Activated CD4-positive, alpha-beta T cell treated with anti-CD3 and anti-CD28 coated beads, Interleukin-2, amount 10 ng/mL, durations not matched to agents 24 days and 14 days (primary cell): ENCODE measurements at regions of chr12 and their contacts with region 1.

Region 1: DNA sequence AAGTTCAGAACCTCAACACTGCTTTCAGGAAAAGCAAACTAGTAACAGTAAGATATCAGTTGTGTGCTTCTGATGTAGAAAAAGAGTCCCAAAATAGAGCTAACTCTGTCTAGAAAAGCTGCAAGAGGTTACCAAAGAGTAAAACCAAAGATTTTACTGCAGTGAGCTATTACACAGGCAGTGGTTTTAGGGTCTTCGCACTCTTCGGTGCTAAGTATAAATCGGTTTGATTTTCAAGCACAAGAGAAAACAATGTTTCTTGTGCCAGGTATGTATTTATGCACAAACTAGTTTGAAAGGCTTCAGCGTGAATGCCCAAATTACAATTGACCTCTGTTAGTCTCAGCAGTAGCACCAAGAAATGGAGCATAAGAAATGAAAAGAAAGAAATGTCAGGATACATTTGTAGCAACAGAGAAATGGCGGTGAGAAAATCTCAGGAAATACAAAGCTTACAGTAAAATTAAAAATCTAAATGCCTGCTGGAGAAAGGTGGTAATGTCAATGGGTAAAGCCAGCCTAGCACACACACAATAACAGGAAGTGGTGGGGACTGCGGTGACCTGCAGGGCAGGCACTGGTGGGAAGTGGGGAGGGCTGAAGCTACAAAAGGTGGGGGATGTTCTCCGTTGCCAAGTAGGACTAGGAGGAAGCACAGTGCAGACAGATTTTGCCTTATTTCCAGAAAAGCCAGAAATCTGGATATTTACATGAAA is 18.0 kb upstream of the DYRK2 start:
- DNase-seq: peak; percentile 96
- H3K4me3 Mint-ChIP-seq: peak overlapping the region; percentile 73
- H3K27ac Mint-ChIP-seq: peak overlapping the region; percentile 86
- H3K4me1 Mint-ChIP-seq: peaks cover 43% of the 10 kb centered on the region
- H3K27me3 Mint-ChIP-seq: peaks cover 2% of the 10 kb centered on the region

Region 2: DNA sequence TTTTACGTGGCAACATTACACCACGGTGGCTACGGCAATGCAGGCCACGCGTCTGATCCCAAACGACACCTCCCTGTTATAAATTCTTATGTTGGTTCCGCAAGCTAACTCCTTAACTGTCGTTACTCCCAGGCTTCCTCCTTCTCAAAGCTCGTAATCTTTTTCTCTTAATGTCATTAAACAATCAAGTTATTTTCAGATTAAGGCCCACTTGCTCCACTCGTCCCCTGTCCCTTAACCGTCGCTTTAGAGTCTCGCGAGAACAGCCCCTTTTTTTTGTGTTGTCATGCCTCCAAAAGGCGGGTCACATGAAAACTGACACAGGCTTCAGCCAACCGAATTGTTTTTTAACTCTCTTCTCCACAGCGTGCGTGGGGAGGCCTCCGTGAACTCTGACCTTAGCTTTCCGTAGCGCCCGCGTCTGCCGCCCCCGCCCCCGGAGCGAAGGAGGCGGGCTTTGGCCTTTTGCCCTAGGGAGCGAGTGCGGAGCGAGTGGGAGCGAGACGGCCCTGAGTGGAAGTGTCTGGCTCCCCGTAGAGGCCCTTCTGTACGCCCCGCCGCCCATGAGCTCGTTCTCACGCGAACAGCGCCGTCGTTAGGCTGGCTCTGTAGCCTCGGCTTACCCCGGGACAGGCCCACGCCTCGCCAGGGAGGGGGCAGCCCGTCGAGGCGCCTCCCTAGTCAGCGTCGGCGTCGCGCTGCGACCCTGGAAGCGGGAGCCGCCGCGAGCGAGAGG is 361.5 kb before region 1 on chr12 and contains the start of gene CAND1:
- intact Hi-C with region 1: loop called (anchors 5 kb)
- DNase-seq: peak; percentile 99
- H3K4me3 Mint-ChIP-seq: peak within 1 kb of the TSS; percentile 90
- H3K27ac Mint-ChIP-seq: peak within 1 kb of the TSS; percentile 100
- H3K4me1 Mint-ChIP-seq: peaks cover 30% of the 10 kb centered on the region
- H3K27me3 Mint-ChIP-seq: no peaks in the 10 kb centered on the region
- total RNA-seq, gene CAND1: 202 and 216 TPM in 2 replicates

Region 3: DNA sequence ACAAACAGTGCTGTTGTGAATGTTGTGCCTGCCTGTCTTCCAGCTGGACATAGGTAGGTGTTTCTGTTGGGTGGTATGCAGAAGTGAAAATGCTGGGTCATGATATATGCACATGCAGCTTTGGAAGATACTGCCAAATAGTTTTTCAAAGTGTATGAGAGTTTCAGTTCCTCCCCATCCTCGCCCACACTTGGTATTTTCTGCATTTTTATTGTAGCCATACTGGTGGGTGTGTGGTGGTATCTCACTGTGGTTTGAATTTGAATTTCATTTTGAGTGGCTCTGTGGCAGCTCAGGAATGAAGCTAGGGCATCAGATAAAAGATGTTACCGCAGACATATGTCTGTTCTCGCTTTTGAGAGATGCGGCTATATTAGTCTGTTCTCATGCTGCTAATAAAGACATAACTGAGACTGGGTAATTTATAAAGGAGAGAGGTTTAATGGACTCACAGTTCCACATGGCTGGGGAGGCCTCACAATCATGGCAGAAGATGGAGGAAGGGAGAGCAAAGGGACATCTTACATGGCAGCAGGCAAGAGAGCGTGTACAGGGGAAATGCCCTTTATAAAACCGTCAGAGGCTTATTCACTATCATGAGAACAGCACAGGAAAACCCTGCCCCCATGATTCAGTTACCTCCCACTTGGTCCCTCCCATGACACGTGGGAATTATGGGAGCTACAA is 178.3 kb before region 1 on chr12:
- intact Hi-C with region 1: loop called (anchors 5 kb)
- DNase-seq: no peak
- H3K4me3 Mint-ChIP-seq: peak overlapping the region; percentile 16
- H3K27ac Mint-ChIP-seq: peak overlapping the region; percentile 85
- H3K4me1 Mint-ChIP-seq: peaks cover 40% of the 10 kb centered on the region
- H3K27me3 Mint-ChIP-seq: peaks cover 44% of the 10 kb centered on the region

Region 4: DNA sequence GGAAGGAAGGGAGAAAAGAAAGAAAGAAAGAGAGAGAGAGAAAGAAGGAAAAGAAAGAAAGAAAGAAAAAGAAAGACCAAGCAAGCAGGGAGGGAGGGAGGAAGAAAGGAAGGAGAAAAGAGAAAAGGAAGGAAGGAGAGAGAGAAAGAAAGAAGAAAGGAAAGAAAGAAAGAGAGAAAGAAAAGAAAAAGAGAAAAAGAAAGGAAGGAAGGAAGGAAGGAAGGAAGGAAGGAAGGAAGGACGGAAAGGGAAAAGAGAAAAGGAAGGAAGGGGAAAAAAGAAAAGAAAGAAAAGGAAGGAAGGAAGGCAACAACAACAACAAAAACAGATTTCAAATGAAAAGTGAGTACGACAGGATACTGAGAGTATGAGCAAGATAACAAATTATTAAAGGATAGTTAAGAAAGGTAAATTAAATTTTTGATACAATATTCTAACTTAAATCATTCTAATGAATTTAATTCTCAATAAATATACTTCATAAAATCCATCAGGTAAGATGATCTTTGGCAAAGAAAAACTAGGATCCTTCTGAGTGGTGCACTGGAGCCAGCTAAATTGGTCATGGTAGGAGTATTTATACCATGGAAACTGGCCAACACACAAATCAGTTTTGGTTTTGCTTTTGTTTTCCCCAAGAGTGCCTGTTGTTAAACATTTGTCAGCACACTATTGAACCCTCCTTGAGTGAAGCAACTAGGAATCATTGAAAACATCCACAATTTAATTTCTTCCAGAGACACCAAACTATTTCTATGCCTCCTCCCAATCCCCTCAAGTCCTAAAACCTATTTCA is 38.1 kb before region 1 on chr12:
- intact Hi-C with region 1: loop called (anchors 5 kb)
- DNase-seq: peak; percentile 82
- H3K4me3 Mint-ChIP-seq: peak overlapping the region; percentile 41
- H3K27ac Mint-ChIP-seq: peak overlapping the region; percentile 74
- H3K4me1 Mint-ChIP-seq: peaks cover 42% of the 10 kb centered on the region
- H3K27me3 Mint-ChIP-seq: peaks cover 4% of the 10 kb centered on the region

Region 5: DNA sequence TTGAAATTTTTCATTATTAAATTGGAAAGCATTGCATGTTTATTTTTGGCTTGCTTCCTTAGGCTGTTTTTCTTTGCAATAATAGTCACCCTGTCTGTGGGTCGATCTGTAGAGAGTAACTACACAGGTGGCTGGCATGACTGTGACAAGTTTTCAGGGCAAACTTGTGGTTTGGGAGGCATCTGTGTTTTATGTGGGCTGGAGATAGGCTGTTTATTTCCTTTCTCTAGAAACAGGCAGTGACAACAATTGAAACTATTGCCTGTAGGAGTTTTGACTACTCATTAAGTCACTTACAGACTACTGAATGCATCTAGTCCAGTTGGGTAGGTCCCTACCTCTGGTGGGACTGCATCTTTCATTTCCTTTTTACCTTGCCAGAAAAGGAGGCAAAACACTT is 173.6 kb after region 1 on chr12:
- intact Hi-C with region 1: loop called (anchors 5 kb)
- DNase-seq: peak; percentile 80
- H3K4me3 Mint-ChIP-seq: no peak overlapping the region
- H3K27ac Mint-ChIP-seq: no peak overlapping the region
- H3K4me1 Mint-ChIP-seq: peaks cover 11% of the 10 kb centered on the region
- H3K27me3 Mint-ChIP-seq: peaks cover 8% of the 10 kb centered on the region

Region 6: GRCh38 chr12:68498732-68499131 is 868.2 kb after region 1 on chr12:
- intact Hi-C with region 1: no loop called
- DNase-seq: no peak
- H3K4me3 Mint-ChIP-seq: no peak overlapping the region
- H3K27ac Mint-ChIP-seq: peak overlapping the region; percentile 39
- H3K4me1 Mint-ChIP-seq: peaks cover 34% of the 10 kb centered on the region
- H3K27me3 Mint-ChIP-seq: no peaks in the 10 kb centered on the region